H1 (cell line): ENCODE measurements at regions of chr11 and their contacts with region 1.

Region 1: GRCh38 chr11:14974515-14975251 is 2.5 kb upstream of the CALCA start:
- DNase-seq: peak in 1 of 2 experiments; percentile 85
- H3K4me3 ChIP-seq: peak overlapping the region; percentile 34 to 55 (median 39); a peak in 7 of 8 replicates
- H3K27ac ChIP-seq: no peak overlapping the region
- H3K4me1 ChIP-seq: peaks cover 11 to 24% (median 15%) of the 10 kb centered on the region in 4 experiments
- H3K27me3 ChIP-seq: peaks cover 51 to 78% (median 63%) of the 10 kb centered on the region in 4 experiments
- CTCF ChIP-seq: peak; percentile 81 to 92 (median 82)
- EP300 ChIP-seq: no peak
- POLR2A ChIP-seq: no peak
- RAD21 ChIP-seq: peak; percentile 53 to 64

Region 2: DNA sequence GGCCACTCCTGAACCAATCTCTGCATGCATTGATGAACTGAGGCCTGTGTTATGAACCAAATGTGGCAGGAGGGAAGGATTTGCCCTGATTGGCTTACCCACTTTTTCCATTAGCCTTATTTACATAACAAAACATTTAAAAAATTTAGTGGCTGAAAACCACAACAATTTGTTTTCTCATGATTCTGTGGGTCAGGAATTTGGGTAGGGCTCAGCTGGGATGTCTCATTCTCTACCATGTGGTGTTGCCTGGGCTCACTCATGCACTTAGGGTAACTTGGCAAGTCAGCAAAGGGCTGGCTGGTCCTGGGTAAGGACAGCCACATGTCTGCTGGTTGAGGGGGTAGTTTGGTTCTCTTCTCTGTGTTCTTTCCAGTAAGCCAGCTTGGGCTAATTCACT is 47.5 kb before region 1 on chr11:
- CTCF ChIA-PET with region 1: interaction called, 11 read pairs
- POLR2A ChIA-PET with region 1: no interaction called
- DNase-seq: no peak
- H3K4me3 ChIP-seq: no peak overlapping the region
- H3K27ac ChIP-seq: no peak overlapping the region
- H3K4me1 ChIP-seq: no peaks in the 10 kb centered on the region
- H3K27me3 ChIP-seq: no peaks in the 10 kb centered on the region
- CTCF ChIP-seq: no peak
- EP300 ChIP-seq: no peak
- POLR2A ChIP-seq: no peak
- RAD21 ChIP-seq: no peak

Region 3: DNA sequence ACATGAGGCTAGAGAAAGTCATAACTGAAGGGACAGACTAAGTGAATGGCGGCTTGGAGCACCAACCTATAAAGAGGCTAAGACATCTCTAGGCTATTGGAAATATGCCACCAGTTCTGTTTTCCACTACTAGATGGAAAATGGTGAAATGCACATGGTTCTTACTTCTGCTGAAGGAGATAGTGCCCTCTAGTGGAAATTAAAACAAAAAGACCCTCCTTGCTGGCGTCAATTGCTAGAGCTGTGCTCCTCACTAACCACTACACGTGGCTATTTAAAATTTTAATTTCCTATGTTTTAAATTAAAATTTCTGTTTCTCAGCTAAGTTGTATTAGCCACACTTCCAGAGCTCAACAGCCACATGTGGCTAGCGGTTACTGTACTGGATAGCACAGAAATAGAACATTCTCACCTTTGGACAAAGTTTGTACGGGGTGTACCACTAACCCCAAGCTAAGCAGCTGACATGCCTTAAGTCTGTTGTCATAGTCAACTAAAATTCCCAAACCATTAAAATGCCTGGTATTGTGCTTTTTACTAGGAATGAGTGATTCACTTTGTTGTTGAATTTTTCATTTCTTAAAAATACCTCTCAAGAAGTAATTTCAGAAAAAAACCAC is 31.6 kb after region 1 on chr11:
- CTCF ChIA-PET with region 1: interaction called, 75 read pairs
- POLR2A ChIA-PET with region 1: interaction called, 4 read pairs
- DNase-seq: no peak
- H3K4me3 ChIP-seq: no peak overlapping the region
- H3K27ac ChIP-seq: no peak overlapping the region
- H3K4me1 ChIP-seq: no peaks in the 10 kb centered on the region
- H3K27me3 ChIP-seq: no peaks in the 10 kb centered on the region
- CTCF ChIP-seq: peak in 2 of 3 experiments; percentile 65 to 69; a peak in 3 of 4 replicates
- EP300 ChIP-seq: no peak
- POLR2A ChIP-seq: no peak
- RAD21 ChIP-seq: peak; percentile 73 to 78

Region 4: GRCh38 chr11:15038963-15039362 is 64.3 kb after region 1 on chr11:
- CTCF ChIA-PET with region 1: interaction called, 15 read pairs
- POLR2A ChIA-PET with region 1: interaction called, 3 read pairs
- DNase-seq: no peak
- H3K4me3 ChIP-seq: no peak overlapping the region
- H3K27ac ChIP-seq: no peak overlapping the region
- H3K4me1 ChIP-seq: peaks cover 2 to 9% (median 5%) of the 10 kb centered on the region in 4 experiments; a peak in 4 of 7 replicates
- H3K27me3 ChIP-seq: no peaks in the 10 kb centered on the region
- CTCF ChIP-seq: peak in 2 of 3 experiments; percentile 22 to 48; a peak in 3 of 4 replicates
- EP300 ChIP-seq: no peak
- POLR2A ChIP-seq: no peak
- RAD21 ChIP-seq: peak; percentile 61 to 65

Region 5: GRCh38 chr11:15093432-15093831 is 118.7 kb after region 1 on chr11:
- CTCF ChIA-PET with region 1: interaction called, 16 read pairs
- POLR2A ChIA-PET with region 1: no interaction called
- DNase-seq: no peak
- H3K4me3 ChIP-seq: no peak overlapping the region
- H3K27ac ChIP-seq: no peak overlapping the region
- H3K4me1 ChIP-seq: no peaks in the 10 kb centered on the region; a peak in 1 of 7 replicates
- H3K27me3 ChIP-seq: no peaks in the 10 kb centered on the region
- CTCF ChIP-seq: no peak
- EP300 ChIP-seq: no peak
- POLR2A ChIP-seq: no peak
- RAD21 ChIP-seq: no peak

Region 6: DNA sequence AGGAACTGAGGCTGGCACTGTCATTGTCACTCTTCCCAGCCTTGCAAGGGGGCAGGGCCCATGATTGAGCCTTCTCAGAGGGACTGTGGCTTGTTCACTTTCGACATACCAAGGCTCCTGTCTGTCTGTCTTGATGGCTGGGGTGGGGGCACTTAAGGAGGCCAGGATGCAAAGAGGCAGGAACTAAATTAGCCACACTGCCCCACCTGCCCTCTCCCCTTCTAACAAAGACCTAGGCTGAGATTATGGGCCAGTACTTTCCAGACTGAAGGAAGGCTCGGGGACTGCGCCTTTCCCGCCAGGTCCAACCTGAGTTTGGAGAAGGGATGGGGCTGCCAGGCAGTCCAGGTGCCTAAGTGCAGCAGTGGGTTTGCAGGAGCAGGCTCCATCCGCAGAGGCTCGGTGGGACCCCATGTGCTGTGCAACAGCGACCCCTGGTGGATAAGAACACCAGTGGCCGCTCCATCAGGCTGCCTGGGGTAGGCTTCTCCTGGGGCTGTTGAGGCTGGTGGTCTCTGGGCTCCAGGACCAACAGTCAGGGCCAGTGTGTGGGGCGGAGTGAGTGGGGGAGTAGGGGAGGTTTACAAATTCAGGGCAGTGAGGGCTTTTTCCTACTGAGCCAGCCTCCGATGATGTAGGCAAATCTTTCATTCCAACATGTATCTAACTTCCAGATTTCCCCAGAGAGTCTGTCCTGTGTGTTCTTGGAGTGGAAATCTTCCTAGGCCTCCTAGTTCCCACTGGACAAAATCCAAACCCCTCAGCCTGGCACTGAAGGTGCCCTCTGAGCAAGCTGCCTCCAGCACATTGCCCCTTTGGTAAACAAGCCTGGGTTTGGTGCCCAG is 233.9 kb after region 1 on chr11:
- CTCF ChIA-PET with region 1: interaction called, 18 read pairs
- POLR2A ChIA-PET with region 1: no interaction called
- DNase-seq: peak; percentile 59 to 92
- H3K4me3 ChIP-seq: no peak overlapping the region
- H3K27ac ChIP-seq: no peak overlapping the region
- H3K4me1 ChIP-seq: peaks cover 0 to 2% (median 0%) of the 10 kb centered on the region in 4 experiments; a peak in 1 of 7 replicates
- H3K27me3 ChIP-seq: no peaks in the 10 kb centered on the region; a peak in 1 of 7 replicates
- CTCF ChIP-seq: peak; percentile 95 to 97 (median 95)
- EP300 ChIP-seq: no peak
- POLR2A ChIP-seq: no peak
- RAD21 ChIP-seq: peak; percentile 99 to 100